H1 (cell line): ENCODE measurements at regions of chr11 and their contacts with region 1.

Region 1: GRCh38 chr11:46445920-46446771 is 54.6 kb upstream of the CHRM4 start:
- DNase-seq: no peak
- H3K4me3 ChIP-seq: no peak overlapping the region
- H3K27ac ChIP-seq: no peak overlapping the region
- H3K4me1 ChIP-seq: peaks cover 0 to 7% (median 2%) of the 10 kb centered on the region in 4 experiments; a peak in 4 of 7 replicates
- H3K27me3 ChIP-seq: no peaks in the 10 kb centered on the region
- CTCF ChIP-seq: peak in 1 of 3 experiments; percentile 15; a peak in 1 of 4 replicates
- EP300 ChIP-seq: no peak
- POLR2A ChIP-seq: no peak
- RAD21 ChIP-seq: peak; percentile 34 to 50; a peak in 3 of 4 replicates

Region 2: DNA sequence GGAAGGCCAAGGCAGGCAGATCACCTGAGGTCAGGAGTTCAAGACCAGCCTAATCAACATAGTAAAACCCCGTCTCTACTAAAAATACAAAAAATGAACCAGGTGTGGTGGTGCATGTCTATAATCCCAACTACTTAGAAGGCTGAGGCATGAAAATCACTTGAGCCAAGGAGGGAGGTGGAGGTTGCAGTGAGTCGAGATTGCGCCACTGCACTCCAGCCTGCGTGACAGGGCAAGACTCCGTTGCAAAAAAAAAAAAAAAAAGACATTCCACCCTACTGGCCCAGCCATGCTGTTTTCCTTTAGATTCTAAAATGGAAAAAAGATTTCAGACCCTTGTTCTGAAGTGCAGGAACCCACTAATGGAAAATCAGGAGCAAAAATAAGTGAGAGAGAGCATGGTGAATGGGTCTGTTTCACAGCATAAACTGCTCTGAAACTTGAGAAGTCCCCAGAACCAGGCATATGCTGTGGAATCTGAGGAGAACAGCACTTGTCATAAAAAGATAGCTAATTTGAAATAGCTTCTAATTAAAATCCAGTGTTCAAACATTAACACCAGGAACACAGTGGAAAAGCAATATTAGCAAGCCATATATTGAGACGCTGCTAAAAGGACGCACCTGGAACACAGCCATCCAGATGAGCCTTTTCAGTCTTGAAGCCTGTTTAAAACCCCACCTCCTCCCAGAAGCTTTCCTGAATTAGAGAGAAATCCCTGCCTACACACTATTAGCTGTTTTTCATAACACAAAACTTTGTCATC is 11.7 kb after region 1 on chr11:
- CTCF ChIA-PET with region 1: interaction called, 15 read pairs
- POLR2A ChIA-PET with region 1: interaction called, 3 read pairs
- DNase-seq: no peak
- H3K4me3 ChIP-seq: no peak overlapping the region
- H3K27ac ChIP-seq: no peak overlapping the region
- H3K4me1 ChIP-seq: peaks cover 6 to 19% (median 12%) of the 10 kb centered on the region in 4 experiments; a peak in 6 of 7 replicates
- H3K27me3 ChIP-seq: no peaks in the 10 kb centered on the region
- CTCF ChIP-seq: no peak
- EP300 ChIP-seq: no peak
- POLR2A ChIP-seq: no peak
- RAD21 ChIP-seq: no peak